ENCODE measurements at regions of chr1 and their contacts with region 1.

Region 1: GRCh38 chr1:42766741-42767509 is at the starts of genes C1orf50 and P3H1:
- DNase-seq: peak; percentile 100
- ATAC-seq: peak; percentile 98
- total RNA-seq, gene C1orf50: 8.7 TPM
- total RNA-seq, gene P3H1: 9.3 TPM

Region 2: GRCh38 chr1:42816585-42817434 is 49.9 kb after region 1 on chr1 and contains the starts of genes ERMAP and SVBP:
- intact Hi-C with region 1: loop called (anchors 2 kb)
- DNase-seq: peak; percentile 97
- ATAC-seq: peak; percentile 99
- total RNA-seq, gene ERMAP: 2.7 TPM
- total RNA-seq, gene SVBP: 15.3 TPM

Measured in Right ventricle myocardium inferior (tissue), 1 donor.